Mucosa of descending colon (tissue), 3 donors: ENCODE measurements at regions of chr1 and their contacts with region 1.

Region 1: GRCh38 chr1:26874896-26875295 is 11.9 kb downstream of the SFN start:
- DNase-seq: no peak
- ATAC-seq: no peak
- H3K4me3 ChIP-seq: no peak overlapping the region
- H3K4me1 ChIP-seq: peaks cover 20% of the 10 kb centered on the region
- CTCF ChIP-seq: no peak

Region 2: DNA sequence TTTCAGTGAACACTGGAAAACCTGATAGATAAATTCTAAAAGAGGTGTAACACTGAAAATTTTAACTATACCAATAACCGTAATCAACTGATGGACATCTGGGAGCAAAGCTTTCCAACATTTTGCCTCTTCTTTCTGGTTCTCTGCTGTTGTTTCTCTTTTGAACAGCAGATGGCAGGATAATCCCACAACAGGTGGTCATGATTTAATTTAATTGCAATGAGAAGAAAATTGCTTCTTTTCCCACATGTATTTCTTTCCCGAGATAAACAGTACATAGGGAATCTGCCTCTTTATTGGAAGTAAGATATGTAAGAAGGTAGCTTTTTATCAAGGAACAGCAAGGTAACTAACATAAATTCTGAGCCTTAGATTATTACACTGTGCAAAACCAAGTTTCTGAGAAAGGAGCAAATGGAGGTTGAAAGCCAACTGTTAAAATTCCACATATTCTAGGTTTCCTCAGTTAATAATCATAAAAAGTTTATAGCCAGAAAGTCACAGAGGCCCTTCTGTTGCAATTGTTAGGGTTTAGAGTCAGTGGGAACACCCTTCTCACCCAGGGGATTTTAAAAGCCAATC is 272.4 kb before region 1 on chr1:
- intact Hi-C with region 1: loop called in 1 of 2 experiments (anchors 5 kb)
- DNase-seq: peak in 1 of 3 donors; percentile 84
- ATAC-seq: peak; percentile 74
- H3K4me3 ChIP-seq: no peak overlapping the region
- H3K4me1 ChIP-seq: no peaks in the 10 kb centered on the region
- CTCF ChIP-seq: peak; percentile 64

Region 3: DNA sequence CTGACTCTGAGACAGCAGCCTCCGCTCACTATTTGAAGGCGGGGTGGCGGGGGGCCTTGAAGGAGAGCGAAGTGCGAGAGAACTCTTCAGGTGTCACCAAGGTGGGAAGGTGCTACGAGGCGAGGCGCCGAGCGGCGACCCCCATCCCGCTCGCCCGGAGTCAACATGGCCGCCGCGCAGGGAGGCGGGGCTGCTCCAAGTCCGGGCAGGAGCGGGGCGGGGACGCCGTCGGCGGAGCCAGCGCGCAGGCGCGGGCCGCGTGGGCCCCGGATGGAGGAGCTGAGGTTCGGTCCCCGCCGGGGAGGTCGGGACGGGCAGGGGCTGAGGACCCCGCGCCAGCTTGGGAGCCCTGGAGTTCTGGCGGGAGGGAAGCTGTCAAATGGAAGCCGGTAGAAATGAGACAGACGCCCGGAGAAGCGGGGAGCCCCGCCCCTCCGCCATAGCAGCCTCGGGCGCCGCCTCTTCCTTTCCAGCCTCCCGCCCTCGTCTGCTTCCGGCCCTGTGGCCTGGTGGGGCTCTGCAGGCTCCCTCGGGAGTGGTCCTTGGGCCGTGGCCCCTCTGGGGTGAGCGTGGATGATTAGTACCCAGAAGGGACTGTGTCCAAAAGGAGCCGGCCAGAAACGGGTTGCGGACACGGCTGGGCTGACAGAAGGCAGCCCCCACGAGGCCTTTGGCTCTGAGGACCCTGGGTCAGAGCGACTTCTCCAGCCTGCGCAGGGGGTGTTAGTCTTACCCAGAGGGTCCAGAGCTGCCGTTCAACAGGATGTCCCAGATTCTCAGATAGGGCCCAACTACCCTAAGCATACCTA is 87.0 kb before region 1 on chr1 and contains the start of gene PIGV:
- intact Hi-C with region 1: no loop called
- DNase-seq: peak; percentile 91 to 93 (median 93)
- ATAC-seq: peak; percentile 89
- H3K4me3 ChIP-seq: peak within 1 kb of the TSS; percentile 64
- H3K4me1 ChIP-seq: peaks cover 47% of the 10 kb centered on the region
- CTCF ChIP-seq: no peak
- total RNA-seq, gene PIGV: 16.5 to 22.3 (median 17.5) TPM